ENCODE measurements at regions of chr17 and their contacts with region 1.

Region 1: DNA sequence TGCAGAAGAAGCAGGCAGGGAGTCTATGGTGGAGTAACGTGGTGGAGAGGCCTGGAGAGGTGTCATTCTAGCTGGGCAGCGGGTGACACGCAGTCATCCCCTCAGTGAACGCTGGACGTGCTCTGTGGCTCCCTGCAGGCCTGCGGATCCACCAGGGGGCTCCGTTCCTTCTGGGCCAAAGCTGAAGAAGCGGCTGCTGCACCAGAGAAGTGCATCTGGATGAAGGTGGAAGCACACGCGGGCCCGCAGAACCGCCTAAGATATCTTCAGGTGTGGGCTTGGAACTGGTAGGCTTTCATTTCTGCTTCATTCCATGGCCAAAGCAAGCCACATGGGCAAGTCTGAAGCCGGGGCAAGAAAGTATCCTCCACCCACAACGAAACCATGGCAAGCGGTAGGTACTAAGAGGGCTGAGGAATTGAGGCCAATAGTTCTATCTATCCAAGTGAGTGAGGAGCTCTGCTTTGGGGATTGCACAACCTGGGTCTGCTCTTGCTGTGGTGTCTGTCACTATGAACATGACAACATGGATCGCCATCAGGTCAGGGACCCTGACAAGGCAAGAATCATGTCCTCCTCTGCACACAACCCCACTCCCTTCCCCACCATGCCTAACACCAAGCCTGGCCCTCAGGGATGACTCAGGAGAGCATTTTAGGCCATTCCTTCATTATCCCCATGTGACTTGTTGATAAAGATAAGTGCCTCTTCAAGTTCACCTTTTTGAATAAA is 78.9 kb upstream of the FBXO47 start:
- DNase-seq: peak in 1 of 2 experiments; percentile 78
- H3K4me3 ChIP-seq: no peak overlapping the region
- H3K27ac ChIP-seq: peak overlapping the region; percentile 97
- H3K4me1 ChIP-seq: peaks cover 0 to 5% (median 0%) of the 10 kb centered on the region in 4 experiments; a peak in 4 of 7 replicates
- H3K27me3 ChIP-seq: no peaks in the 10 kb centered on the region
- CTCF ChIP-seq: peak; percentile 72 to 90 (median 77)
- EP300 ChIP-seq: no peak
- POLR2A ChIP-seq: peak in 1 of 2 experiments; percentile 63; a peak in 1 of 3 replicates
- RAD21 ChIP-seq: peak; percentile 42 to 65; a peak in 3 of 4 replicates

Region 2: GRCh38 chr17:38879878-38880682 is 166.0 kb before region 1 on chr17:
- CTCF ChIA-PET with region 1: no interaction called
- POLR2A ChIA-PET with region 1: no interaction called
- DNase-seq: peak; percentile 79 to 91
- H3K4me3 ChIP-seq: peak overlapping the region in 3 of 4 experiments; percentile 7 to 43 (median 20); a peak in 5 of 8 replicates
- H3K27ac ChIP-seq: peak overlapping the region; percentile 72; the same call in 1 of the 2 replicates
- H3K4me1 ChIP-seq: peaks cover 31 to 51% (median 37%) of the 10 kb centered on the region in 4 experiments
- H3K27me3 ChIP-seq: no peaks in the 10 kb centered on the region
- CTCF ChIP-seq: no peak
- EP300 ChIP-seq: peak in 1 of 2 experiments; percentile 42; a peak in 1 of 3 replicates
- POLR2A ChIP-seq: no peak
- RAD21 ChIP-seq: peak in 1 of 2 experiments; percentile 5; a peak in 1 of 4 replicates

Region 3: GRCh38 chr17:38908676-38909181 is 137.4 kb before region 1 on chr17:
- CTCF ChIA-PET with region 1: no interaction called
- POLR2A ChIA-PET with region 1: no interaction called
- DNase-seq: no peak
- H3K4me3 ChIP-seq: no peak overlapping the region
- H3K27ac ChIP-seq: no peak overlapping the region
- H3K4me1 ChIP-seq: peaks cover 0 to 11% (median 5%) of the 10 kb centered on the region in 4 experiments; a peak in 4 of 7 replicates
- H3K27me3 ChIP-seq: no peaks in the 10 kb centered on the region
- CTCF ChIP-seq: no peak
- EP300 ChIP-seq: no peak
- POLR2A ChIP-seq: no peak
- RAD21 ChIP-seq: no peak

Region 4: GRCh38 chr17:39027455-39028035 is 18.6 kb before region 1 on chr17:
- CTCF ChIA-PET with region 1: interaction called, 48 read pairs
- POLR2A ChIA-PET with region 1: interaction called, 5 read pairs
- DNase-seq: no peak
- H3K4me3 ChIP-seq: peak overlapping the region; percentile 16 to 60 (median 38); a peak in 6 of 8 replicates
- H3K27ac ChIP-seq: no peak overlapping the region
- H3K4me1 ChIP-seq: no peaks in the 10 kb centered on the region; a peak in 1 of 7 replicates
- H3K27me3 ChIP-seq: peaks cover 0 to 4% (median 2%) of the 10 kb centered on the region in 4 experiments; a peak in 5 of 7 replicates
- CTCF ChIP-seq: no peak
- EP300 ChIP-seq: no peak
- POLR2A ChIP-seq: no peak
- RAD21 ChIP-seq: no peak

Region 5: DNA sequence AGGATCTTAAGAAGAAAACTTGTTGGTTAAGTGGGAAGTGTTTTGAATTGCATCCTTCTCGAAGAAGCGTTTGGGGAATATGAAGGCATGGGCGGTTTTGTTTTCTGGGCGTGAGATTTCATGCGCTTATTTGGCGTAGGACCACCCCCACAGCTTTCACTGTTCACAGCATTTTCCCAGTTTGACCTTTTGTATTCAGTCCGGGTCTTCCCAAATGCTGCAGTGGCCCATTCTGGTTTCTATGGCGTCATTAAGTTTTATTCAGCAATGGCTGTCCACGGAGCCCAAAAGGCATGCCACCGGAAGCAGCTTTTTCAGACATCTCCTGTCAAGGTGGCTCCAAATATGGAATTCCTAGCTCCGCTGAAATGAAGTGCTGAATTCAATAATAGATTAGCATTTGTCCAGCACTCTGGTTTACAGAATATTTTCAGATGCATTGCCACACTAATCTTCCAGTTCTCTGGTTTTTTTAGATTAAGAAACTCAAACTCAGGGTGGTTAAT is 11.6 kb after region 1 on chr17:
- CTCF ChIA-PET with region 1: interaction called, 31 read pairs
- POLR2A ChIA-PET with region 1: interaction called, 11 read pairs
- DNase-seq: peak in 1 of 2 experiments; percentile 11
- H3K4me3 ChIP-seq: peak overlapping the region in 3 of 4 experiments; percentile 61 to 84 (median 64); a peak in 5 of 8 replicates
- H3K27ac ChIP-seq: no peak overlapping the region
- H3K4me1 ChIP-seq: peaks cover 0 to 4% (median 3%) of the 10 kb centered on the region in 4 experiments; a peak in 5 of 7 replicates
- H3K27me3 ChIP-seq: no peaks in the 10 kb centered on the region
- CTCF ChIP-seq: no peak
- EP300 ChIP-seq: no peak
- POLR2A ChIP-seq: no peak
- RAD21 ChIP-seq: no peak

Region 6: DNA sequence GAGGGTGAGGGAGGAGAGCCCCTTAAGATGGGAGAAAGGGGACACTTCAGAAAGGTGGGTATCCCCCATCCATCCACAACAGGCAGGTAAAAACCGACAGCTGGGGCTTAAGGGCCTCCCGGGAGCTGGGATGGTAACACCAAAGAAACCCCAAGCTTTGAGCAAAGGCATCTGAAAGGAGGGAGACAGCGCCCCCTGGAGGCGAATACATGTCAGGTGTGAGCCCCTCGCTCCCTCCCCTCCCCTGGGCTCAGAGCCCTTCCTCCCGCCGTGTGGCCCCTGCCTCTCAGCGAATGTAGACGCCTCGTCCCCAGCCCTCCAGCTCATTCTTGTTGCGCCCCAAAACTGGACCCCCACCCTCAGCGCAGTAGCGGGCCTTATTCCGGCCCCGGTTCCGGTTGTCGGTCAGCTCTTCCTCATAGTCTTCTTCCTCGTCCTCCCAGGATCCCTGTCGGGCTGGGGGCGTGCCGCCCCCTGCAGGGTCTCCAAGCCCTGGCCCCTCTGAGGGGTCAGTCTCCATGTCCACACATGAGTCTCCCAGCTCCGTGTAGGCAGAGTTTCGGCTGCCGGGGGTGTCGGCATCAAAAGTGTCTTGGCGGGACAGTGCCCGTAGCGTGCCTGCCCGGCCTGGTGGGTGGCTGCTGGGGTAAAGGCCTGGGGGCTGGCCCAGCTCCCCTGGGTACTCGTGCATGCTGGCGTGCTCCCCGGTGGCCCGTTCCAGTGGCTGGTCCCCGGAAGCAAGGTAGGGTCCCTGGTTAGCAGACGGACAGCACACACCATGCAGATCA is 129.0 kb after region 1 on chr17:
- CTCF ChIA-PET with region 1: interaction called, 10 read pairs
- POLR2A ChIA-PET with region 1: no interaction called
- DNase-seq: peak; percentile 82 to 92
- H3K4me3 ChIP-seq: peak overlapping the region in 1 of 4 experiments; percentile 22; a peak in 1 of 8 replicates
- H3K27ac ChIP-seq: no peak overlapping the region
- H3K4me1 ChIP-seq: peaks cover 0 to 14% (median 10%) of the 10 kb centered on the region in 4 experiments; a peak in 6 of 7 replicates
- H3K27me3 ChIP-seq: no peaks in the 10 kb centered on the region
- CTCF ChIP-seq: peak; percentile 87 to 92 (median 91)
- EP300 ChIP-seq: no peak
- POLR2A ChIP-seq: peak in 1 of 2 experiments; percentile 60; a peak in 1 of 3 replicates
- RAD21 ChIP-seq: peak; percentile 71 to 83

Measured in H1 (cell line).